PC-3 (cell line): ENCODE measurements at regions of chr3 and their contacts with region 1.

Region 1: DNA sequence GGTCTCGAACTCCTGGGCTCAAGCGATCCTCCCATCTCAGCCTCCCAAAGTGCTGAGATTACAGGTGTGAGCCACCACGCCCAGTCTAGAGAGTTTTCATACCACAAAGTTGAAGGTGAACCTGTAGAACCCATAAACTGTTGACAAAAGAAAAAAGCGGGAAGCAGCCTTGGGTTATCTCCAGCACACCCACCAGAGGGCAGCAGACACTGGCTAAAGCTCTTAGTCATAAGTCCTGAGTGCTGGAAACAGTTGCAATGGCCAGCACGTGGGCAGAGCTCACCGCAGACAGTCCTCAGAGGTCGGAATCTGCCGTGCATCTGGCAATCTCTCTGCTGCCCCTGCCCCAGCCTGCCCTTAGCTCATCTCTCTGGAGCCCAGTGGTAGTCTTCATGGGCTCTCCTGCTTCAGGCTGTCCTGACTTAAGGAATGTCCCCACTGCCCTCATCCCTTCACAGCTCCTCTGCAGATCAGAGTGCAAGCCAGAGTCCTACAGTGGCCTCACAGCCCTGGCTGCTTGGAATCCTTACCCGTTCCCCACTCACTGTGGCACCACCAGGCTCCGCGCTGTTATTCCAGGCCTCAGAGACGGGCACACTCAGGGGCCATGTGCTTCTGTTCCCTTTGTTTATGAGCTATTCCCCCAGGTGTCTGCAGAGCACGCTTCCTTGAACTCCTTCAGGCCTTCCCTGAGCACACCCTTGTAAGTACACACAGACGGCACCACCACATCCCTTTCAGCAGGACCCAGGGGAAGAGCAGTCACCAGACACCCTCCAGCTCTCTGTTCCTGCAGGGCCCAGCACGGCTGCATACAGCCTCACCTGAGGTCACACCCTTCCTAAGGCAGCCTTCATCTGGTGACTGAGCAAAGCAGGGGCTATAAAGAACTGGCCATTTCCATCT is 8.8 kb upstream of the ELP6 start:
- DNase-seq: peak; percentile 89
- ATAC-seq: peak; percentile 95
- H3K4me3 ChIP-seq: no peak overlapping the region
- H3K27ac ChIP-seq: no peak overlapping the region
- H3K4me1 ChIP-seq: no peaks in the 10 kb centered on the region
- H3K27me3 ChIP-seq: no peaks in the 10 kb centered on the region
- CTCF ChIP-seq: peak; percentile 80

Region 2: GRCh38 chr3:47617086-47618010 is 95.0 kb after region 1 on chr3:
- CTCF ChIA-PET with region 1: interaction called, 5 read pairs
- POLR2A ChIA-PET with region 1: no interaction called
- intact Hi-C with region 1: loop called (anchors 1 kb)
- DNase-seq: peak; percentile 83
- ATAC-seq: peak; percentile 71
- H3K4me3 ChIP-seq: peak overlapping the region; percentile 29; the same call in 1 of the 2 replicates
- H3K27ac ChIP-seq: peak overlapping the region; percentile 92
- H3K4me1 ChIP-seq: peaks cover 38% of the 10 kb centered on the region
- H3K27me3 ChIP-seq: no peaks in the 10 kb centered on the region
- CTCF ChIP-seq: no peak

Region 3: GRCh38 chr3:47664519-47664918 is 142.2 kb after region 1 on chr3:
- CTCF ChIA-PET with region 1: interaction called, 9 read pairs
- POLR2A ChIA-PET with region 1: no interaction called
- intact Hi-C with region 1: loop called (anchors 1 kb)
- DNase-seq: peak; percentile 43
- ATAC-seq: no peak
- H3K4me3 ChIP-seq: no peak overlapping the region
- H3K27ac ChIP-seq: no peak overlapping the region
- H3K4me1 ChIP-seq: peaks cover 26% of the 10 kb centered on the region
- H3K27me3 ChIP-seq: no peaks in the 10 kb centered on the region
- CTCF ChIP-seq: peak; percentile 50; the same call in 1 of the 2 replicates

Region 4: GRCh38 chr3:47791193-47791855 is 269.0 kb after region 1 on chr3:
- CTCF ChIA-PET with region 1: interaction called, 10 read pairs
- POLR2A ChIA-PET with region 1: no interaction called
- intact Hi-C with region 1: loop called (anchors 1 kb)
- DNase-seq: no peak
- ATAC-seq: no peak
- H3K4me3 ChIP-seq: no peak overlapping the region
- H3K27ac ChIP-seq: no peak overlapping the region
- H3K4me1 ChIP-seq: no peaks in the 10 kb centered on the region
- H3K27me3 ChIP-seq: no peaks in the 10 kb centered on the region
- CTCF ChIP-seq: no peak

Region 5: DNA sequence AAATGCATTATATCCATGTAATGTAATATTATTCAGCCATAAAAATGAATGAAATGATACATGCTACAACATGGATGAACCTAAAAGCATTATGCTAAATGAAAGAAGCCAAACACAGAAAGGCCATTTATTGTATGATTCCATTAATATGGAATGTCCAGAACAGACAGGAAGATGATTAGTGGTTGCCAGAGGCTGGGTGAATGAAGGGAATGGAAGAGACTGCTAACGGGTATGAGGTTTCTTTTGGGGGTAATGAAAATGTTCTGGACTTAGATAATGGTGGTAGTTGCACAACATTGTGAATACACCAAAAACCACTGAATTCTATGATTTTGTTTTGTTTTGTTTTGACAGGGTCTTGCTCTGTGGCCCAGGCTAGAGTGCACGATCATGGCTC is 555.5 kb after region 1 on chr3:
- CTCF ChIA-PET with region 1: no interaction called
- POLR2A ChIA-PET with region 1: interaction called, 10 read pairs
- intact Hi-C with region 1: no loop called
- DNase-seq: peak; percentile 25
- ATAC-seq: peak; percentile 42; the same call in 1 of the 2 replicates
- H3K4me3 ChIP-seq: no peak overlapping the region
- H3K27ac ChIP-seq: no peak overlapping the region
- H3K4me1 ChIP-seq: peaks cover 18% of the 10 kb centered on the region
- H3K27me3 ChIP-seq: no peaks in the 10 kb centered on the region
- CTCF ChIP-seq: no peak